Aorta (tissue), 5 donors: ENCODE measurements at regions of chr1 and their contacts with region 1.

Region 1: DNA sequence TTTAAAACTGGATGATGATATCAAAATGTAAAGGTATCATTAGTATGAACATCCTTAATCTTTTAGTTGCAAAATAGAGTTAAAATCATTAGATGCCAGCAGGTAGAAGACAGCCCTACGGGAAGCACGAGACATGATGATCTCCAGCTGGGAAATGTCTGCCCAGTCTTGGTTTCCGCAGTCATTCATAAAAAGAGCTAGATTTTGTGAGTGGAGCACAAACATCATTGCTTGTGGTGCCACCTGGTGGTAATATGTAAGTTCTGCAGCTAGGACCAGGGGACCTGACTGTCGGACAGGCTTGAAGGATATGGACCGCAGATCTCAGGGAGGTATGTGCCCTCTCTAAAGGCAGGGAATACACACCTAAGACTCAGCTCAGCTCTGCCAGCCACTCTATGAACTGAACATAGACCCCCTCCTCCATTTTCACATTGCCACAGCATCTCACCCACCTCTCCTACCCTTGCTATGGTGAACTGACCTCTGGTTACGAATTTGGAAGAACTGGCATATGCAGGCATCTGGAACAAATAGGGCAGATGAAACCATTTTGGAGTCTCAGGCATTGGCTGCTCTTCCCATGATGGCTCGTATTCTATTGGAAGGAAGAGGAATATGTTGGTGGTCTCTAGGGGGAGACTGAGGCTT is 9.2 kb downstream of the FCMR start:
- DNase-seq: peak in 1 of 2 donors; percentile 69
- ATAC-seq: peak; percentile 81
- H3K4me3 ChIP-seq: no peak overlapping the region
- H3K27ac ChIP-seq: no peak overlapping the region
- H3K4me1 ChIP-seq: no peaks in the 10 kb centered on the region
- H3K27me3 ChIP-seq: no peaks in the 10 kb centered on the region

Region 2: GRCh38 chr1:206479183-206480125 is 433.1 kb before region 1 on chr1:
- intact Hi-C with region 1: loop called (anchors 5 kb)
- DNase-seq: peak; percentile 71 to 88
- ATAC-seq: peak; percentile 53
- H3K4me3 ChIP-seq: no peak overlapping the region
- H3K27ac ChIP-seq: no peak overlapping the region
- H3K4me1 ChIP-seq: no peaks in the 10 kb centered on the region
- H3K27me3 ChIP-seq: no peaks in the 10 kb centered on the region

Region 3: GRCh38 chr1:206489980-206490770 is 422.4 kb before region 1 on chr1:
- intact Hi-C with region 1: loop called in 1 of 2 experiments (anchors 5 kb)
- DNase-seq: peak; percentile 80 to 93
- ATAC-seq: peak; percentile 88
- H3K4me3 ChIP-seq: no peak overlapping the region
- H3K27ac ChIP-seq: no peak overlapping the region
- H3K4me1 ChIP-seq: no peaks in the 10 kb centered on the region
- H3K27me3 ChIP-seq: no peaks in the 10 kb centered on the region

Region 4: GRCh38 chr1:206612129-206612876 is 300.3 kb before region 1 on chr1 and contains the start of gene EIF2D:
- intact Hi-C with region 1: loop called in 1 of 2 experiments (anchors 5 kb)
- DNase-seq: peak; percentile 95 to 98
- ATAC-seq: peak; percentile 100
- H3K4me3 ChIP-seq: peak within 1 kb of the TSS; percentile 43 to 83
- H3K27ac ChIP-seq: peak within 1 kb of the TSS in 1 of 2 donors; percentile 82
- H3K4me1 ChIP-seq: no peaks in the 10 kb centered on the region
- H3K27me3 ChIP-seq: no peaks in the 10 kb centered on the region
- total RNA-seq, gene EIF2D: 29.6 to 46.5 TPM

Region 5: GRCh38 chr1:206635080-206635977 is 277.2 kb before region 1 on chr1 and contains the start of gene DYRK3:
- intact Hi-C with region 1: loop called (anchors 1 to 2 kb)
- DNase-seq: peak; percentile 96 to 99
- ATAC-seq: peak; percentile 97
- H3K4me3 ChIP-seq: peak within 1 kb of the TSS; percentile 56 to 79
- H3K27ac ChIP-seq: peak within 1 kb of the TSS in 1 of 2 donors; percentile 15
- H3K4me1 ChIP-seq: peaks cover 0 to 4% of the 10 kb centered on the region in 2 donors
- H3K27me3 ChIP-seq: no peaks in the 10 kb centered on the region
- total RNA-seq, gene DYRK3: 8.2 to 10.7 TPM

Region 6: DNA sequence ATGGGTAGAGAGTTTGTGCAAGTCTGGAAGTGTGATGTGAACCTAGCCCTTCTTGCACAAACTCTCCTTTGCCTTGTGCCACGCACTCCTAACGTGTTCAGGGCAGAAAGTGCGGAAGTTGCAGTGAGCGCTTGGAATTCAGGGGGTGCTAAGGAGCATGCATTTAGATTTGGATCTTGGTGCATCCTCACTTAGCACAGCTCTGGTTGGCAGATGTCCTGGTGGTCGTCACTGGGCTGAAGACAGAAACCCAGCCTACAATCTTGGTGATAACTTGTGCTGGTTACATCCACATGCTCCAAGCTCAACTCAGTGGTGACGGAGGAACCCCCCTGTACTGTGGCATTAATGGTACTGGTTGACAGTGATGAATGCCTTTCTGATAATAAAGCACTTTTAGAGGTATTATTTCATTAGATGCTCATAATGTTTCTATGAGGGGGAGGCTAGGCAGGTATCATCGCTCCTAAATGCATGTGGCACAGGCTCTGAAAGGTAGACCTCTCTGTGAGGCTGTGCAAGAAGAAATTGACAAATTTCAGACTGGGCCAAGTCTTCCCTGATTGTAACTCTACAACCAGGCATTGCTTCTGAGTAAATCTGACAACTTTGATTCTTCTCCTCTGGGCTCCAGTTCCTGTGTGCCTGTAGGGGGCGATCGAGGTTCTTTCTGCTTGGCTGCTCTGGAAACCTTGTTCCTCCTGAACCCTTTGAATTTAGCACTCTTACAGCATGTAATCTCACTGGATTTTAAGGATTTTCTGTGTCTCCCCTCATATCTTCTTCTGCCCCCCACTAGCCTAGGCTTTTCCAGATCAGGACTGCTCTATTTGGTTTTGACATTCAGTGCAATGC is 187.2 kb before region 1 on chr1:
- intact Hi-C with region 1: loop called (anchors 5 to 10 kb)
- DNase-seq: no peak
- ATAC-seq: no peak
- H3K4me3 ChIP-seq: no peak overlapping the region
- H3K27ac ChIP-seq: no peak overlapping the region
- H3K4me1 ChIP-seq: peaks cover 2 to 5% of the 10 kb centered on the region in 2 donors
- H3K27me3 ChIP-seq: no peaks in the 10 kb centered on the region

Region 7: GRCh38 chr1:206734499-206735142 is 177.9 kb before region 1 on chr1:
- intact Hi-C with region 1: loop called (anchors 5 to 10 kb)
- DNase-seq: peak; percentile 60 to 83
- ATAC-seq: peak; percentile 60
- H3K4me3 ChIP-seq: no peak overlapping the region
- H3K27ac ChIP-seq: no peak overlapping the region
- H3K4me1 ChIP-seq: no peaks in the 10 kb centered on the region
- H3K27me3 ChIP-seq: no peaks in the 10 kb centered on the region